Heart left ventricle (tissue), 16 donors: ENCODE measurements at regions of chr1 and their contacts with region 1.

Region 1: DNA sequence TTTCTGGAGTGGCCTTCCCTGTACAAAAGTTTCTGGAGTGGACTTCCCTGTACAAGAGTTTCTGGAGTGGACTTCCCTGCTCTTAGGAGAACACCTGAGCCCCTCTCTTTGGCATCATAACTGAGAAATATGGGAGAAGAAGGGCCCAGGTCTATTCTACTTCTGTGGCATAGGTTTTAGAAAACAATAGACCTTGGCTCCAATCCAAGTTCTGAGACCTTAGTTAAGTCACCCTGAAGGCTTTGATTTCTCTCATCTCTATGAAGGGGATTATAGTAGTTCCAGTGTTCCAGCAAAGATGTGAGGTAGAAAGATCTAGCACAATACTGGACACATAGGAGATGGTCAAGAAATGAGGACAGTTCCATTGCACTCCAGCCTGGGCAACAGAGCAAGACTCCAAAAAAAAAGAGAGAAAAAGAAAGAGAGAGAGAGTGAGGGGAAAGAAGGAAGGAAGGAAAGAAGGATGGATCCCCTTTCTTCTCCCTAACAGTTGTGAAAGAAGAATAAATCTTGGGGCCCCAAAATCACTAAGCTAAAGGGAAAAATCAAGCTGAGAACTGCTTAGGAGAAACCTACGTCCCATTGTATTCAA is 13.3 kb upstream of the EIF4G3 start:
- DNase-seq: no peak
- ATAC-seq: peak in 1 of 4 donors; percentile 36
- H3K4me3 ChIP-seq: no peak overlapping the region
- H3K27ac ChIP-seq: no peak overlapping the region
- H3K4me1 ChIP-seq: peaks cover 0 to 21% (median 6%) of the 10 kb centered on the region in 12 donors
- H3K27me3 ChIP-seq: no peaks in the 10 kb centered on the region
- CTCF ChIP-seq: no peak
- POLR2A ChIP-seq: no peak

Region 2: DNA sequence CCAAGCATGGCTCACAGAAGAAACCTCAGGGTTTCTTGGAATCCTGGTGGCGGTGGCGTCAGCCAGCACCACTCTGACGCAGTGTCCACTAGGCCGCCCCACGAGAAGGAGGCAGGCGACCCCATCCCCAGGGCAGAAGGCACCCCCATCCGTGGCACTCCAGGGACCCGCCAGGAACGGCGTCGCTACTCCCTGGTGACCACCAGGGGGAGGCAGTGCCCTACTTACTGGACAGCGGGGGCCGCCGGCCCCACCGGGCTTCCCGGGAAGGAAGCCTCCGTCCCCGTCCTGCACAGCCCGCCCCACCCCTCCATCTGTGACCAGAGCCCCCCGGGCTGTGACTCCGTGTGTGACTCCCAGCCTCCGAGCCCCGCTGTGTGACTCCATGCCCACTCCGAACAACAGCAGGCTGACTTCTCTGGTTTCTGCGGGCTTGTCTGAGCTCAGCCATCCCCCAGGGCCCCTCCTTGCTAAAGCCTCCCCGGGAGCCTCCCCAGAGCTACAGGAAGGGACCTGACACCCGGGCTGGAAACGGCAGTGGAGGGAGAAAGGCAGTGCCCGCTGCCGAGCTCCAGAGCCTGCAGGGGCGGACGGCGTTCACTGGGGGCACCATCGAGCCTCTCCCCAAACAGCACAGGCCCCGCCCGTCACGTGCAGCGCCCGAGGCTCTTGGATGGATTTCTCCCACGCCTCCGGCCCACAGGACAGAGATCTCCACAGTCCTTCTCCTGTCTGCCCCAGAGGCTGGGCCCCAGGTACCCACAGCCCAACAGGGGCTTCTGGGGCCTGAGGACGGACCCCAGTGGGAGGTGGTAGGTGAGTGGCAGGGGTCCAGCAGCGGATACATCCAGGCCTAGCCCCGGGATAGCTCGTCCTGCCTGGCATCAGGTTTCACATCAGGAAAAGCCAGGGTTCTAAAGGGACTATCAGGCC is 493.3 kb before region 1 on chr1:
- intact Hi-C with region 1: loop called (anchors 1 to 5 kb)
- DNase-seq: peak; percentile 83 to 91 (median 88)
- ATAC-seq: peak; percentile 86 to 94 (median 93)
- H3K4me3 ChIP-seq: peak overlapping the region; percentile 32 to 70 (median 62)
- H3K27ac ChIP-seq: peak overlapping the region; percentile 31 to 88 (median 77)
- H3K4me1 ChIP-seq: peaks cover 0 to 17% (median 5%) of the 10 kb centered on the region in 12 donors
- H3K27me3 ChIP-seq: no peaks in the 10 kb centered on the region
- CTCF ChIP-seq: peak; percentile 81 to 98 (median 91)
- POLR2A ChIP-seq: no peak

Region 3: DNA sequence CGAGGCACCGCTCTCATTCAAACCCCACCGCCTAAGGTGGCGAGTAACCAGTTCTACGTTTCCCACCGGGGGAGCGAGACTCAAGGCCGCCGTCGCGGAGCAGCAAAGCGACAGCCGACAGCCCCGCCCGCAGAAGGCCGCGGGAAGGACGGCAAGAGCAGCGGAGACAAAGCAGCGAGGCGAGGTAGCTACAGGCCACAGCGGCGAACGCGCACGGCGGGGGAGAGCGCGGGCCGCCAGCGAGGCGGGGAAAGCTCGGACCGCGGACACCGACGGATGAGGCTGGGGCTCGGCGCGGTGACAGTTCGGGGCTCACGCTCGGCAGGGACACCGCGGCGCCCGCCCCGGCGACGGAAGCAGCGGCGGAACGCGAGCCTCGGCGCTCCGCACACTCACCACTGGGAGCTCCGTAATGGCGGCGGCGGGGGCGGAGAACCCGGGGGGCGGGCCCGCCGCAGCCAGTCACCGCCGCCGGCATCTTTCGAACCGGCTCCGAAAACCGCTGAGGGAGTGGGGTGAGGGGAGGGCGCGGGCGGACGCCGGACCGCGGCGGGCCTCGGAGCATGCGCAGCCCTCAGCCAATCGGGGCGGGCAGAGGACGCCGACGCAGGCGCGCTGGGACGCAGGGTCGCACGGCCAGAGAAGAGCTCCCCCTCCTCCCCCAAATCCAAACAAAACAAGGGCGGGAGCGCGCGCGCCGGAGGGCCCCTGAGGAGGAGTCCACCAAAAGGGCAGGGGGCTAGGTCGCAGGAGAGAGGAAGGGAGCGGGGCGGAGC is 403.6 kb before region 1 on chr1:
- intact Hi-C with region 1: loop called in 2 of 10 experiments (anchors 2 to 10 kb)
- DNase-seq: peak; percentile 95 to 99 (median 96)
- ATAC-seq: peak; percentile 87 to 97 (median 94)
- H3K4me3 ChIP-seq: peak overlapping the region; percentile 77 to 99 (median 95)
- H3K27ac ChIP-seq: peak overlapping the region; percentile 84 to 100 (median 98)
- H3K4me1 ChIP-seq: peaks cover 4 to 50% (median 30%) of the 10 kb centered on the region in 12 donors
- H3K27me3 ChIP-seq: no peaks in the 10 kb centered on the region
- CTCF ChIP-seq: peak in 1 of 12 donors; percentile 12
- POLR2A ChIP-seq: peak in 1 of 2 donors; percentile 79

Region 4: GRCh38 chr1:20981915-20982314 is 208.1 kb before region 1 on chr1:
- intact Hi-C with region 1: loop called (anchors 2 to 10 kb)
- DNase-seq: no peak
- ATAC-seq: peak in 2 of 4 donors; percentile 45 to 77
- H3K4me3 ChIP-seq: no peak overlapping the region
- H3K27ac ChIP-seq: no peak overlapping the region
- H3K4me1 ChIP-seq: peaks cover 0 to 7% (median 0%) of the 10 kb centered on the region in 12 donors
- H3K27me3 ChIP-seq: no peaks in the 10 kb centered on the region
- CTCF ChIP-seq: peak in 10 of 12 donors; percentile 15 to 59 (median 41)
- POLR2A ChIP-seq: no peak

Region 5: GRCh38 chr1:21060523-21060922 is 129.5 kb before region 1 on chr1:
- intact Hi-C with region 1: loop called in 1 of 10 experiments (anchors 5 kb)
- DNase-seq: no peak
- ATAC-seq: no peak
- H3K4me3 ChIP-seq: no peak overlapping the region
- H3K27ac ChIP-seq: no peak overlapping the region
- H3K4me1 ChIP-seq: peaks cover 0 to 9% (median 0%) of the 10 kb centered on the region in 12 donors
- H3K27me3 ChIP-seq: no peaks in the 10 kb centered on the region
- CTCF ChIP-seq: no peak
- POLR2A ChIP-seq: no peak

Region 6: GRCh38 chr1:21077085-21077484 is 112.9 kb before region 1 on chr1:
- intact Hi-C with region 1: loop called in 1 of 10 experiments (anchors 10 kb)
- DNase-seq: peak in 1 of 5 donors; percentile 35
- ATAC-seq: peak in 2 of 4 donors; percentile 24 to 52
- H3K4me3 ChIP-seq: no peak overlapping the region
- H3K27ac ChIP-seq: peak overlapping the region in 1 of 12 donors; percentile 63
- H3K4me1 ChIP-seq: peaks cover 0 to 37% (median 5%) of the 10 kb centered on the region in 12 donors
- H3K27me3 ChIP-seq: no peaks in the 10 kb centered on the region
- CTCF ChIP-seq: no peak
- POLR2A ChIP-seq: no peak

Region 7: DNA sequence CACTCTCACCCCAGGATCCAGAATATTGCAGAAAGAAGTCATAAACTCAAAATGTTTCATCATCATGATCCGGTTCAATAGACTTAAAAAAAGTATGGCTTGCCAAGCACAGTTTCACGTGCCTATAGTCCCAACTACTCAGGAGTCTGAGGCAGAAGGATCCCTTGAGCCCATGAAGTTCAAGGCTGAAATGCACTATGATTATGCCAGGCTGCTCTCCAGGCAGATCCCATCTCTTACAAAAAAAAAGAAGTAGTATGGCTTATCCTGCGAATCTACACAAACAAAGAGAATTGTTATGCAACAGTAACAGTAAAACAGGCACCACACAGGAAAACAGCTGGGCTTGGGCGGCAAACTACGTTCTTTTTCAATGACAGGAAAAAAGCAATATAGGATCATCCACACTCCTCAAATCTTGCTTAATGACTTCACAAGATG is 89.5 kb before region 1 on chr1:
- intact Hi-C with region 1: loop called in 1 of 10 experiments (anchors 10 kb)
- DNase-seq: peak in 1 of 5 donors; percentile 35
- ATAC-seq: peak in 3 of 4 donors; percentile 51 to 60 (median 58)
- H3K4me3 ChIP-seq: no peak overlapping the region
- H3K27ac ChIP-seq: peak overlapping the region in 1 of 12 donors; percentile 67
- H3K4me1 ChIP-seq: peaks cover 0 to 38% (median 0%) of the 10 kb centered on the region in 12 donors
- H3K27me3 ChIP-seq: no peaks in the 10 kb centered on the region
- CTCF ChIP-seq: no peak
- POLR2A ChIP-seq: no peak

Region 8: GRCh38 chr1:21124846-21125245 is 65.2 kb before region 1 on chr1:
- intact Hi-C with region 1: no loop called
- DNase-seq: no peak
- ATAC-seq: no peak
- H3K4me3 ChIP-seq: no peak overlapping the region
- H3K27ac ChIP-seq: no peak overlapping the region
- H3K4me1 ChIP-seq: peaks cover 0 to 24% (median 0%) of the 10 kb centered on the region in 12 donors
- H3K27me3 ChIP-seq: no peaks in the 10 kb centered on the region
- CTCF ChIP-seq: no peak
- POLR2A ChIP-seq: no peak